AG04450 (cell line): ENCODE measurements at regions of chr11 and their contacts with region 1.

Region 1: GRCh38 chr11:120235024-120235861 is 4.7 kb upstream of the POU2F3 start:
- DNase-seq: no peak
- H3K4me3 ChIP-seq: no peak overlapping the region
- H3K27ac ChIP-seq: no peak overlapping the region
- H3K27me3 ChIP-seq: peaks cover 48% of the 10 kb centered on the region
- CTCF ChIP-seq: peak; percentile 83

Region 2: DNA sequence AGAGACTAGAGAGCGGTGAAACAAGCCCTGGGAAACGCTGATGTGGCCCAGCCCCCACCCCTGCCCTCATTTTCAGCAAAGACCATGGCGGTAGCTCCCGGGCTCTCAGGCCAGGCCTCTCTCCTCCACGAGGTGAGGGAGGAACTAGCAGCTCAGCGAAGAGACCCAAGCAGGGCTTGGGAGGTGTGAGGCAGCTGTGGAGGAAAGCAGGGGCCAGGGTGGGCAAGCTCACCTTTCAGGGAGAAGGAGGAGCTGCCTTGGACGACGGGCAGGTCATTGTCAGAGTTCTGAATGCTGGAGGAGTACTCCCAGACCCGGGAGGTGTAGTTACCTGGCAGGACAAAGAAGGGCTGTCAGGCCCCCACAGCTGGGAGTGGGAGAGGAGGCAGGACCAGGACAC is 117.3 kb before region 1 on chr11:
- CTCF ChIA-PET with region 1: no interaction called
- POLR2A ChIA-PET with region 1: no interaction called
- DNase-seq: no peak
- H3K4me3 ChIP-seq: no peak overlapping the region
- H3K27ac ChIP-seq: no peak overlapping the region
- H3K27me3 ChIP-seq: peaks cover 16% of the 10 kb centered on the region
- CTCF ChIP-seq: no peak

Region 3: DNA sequence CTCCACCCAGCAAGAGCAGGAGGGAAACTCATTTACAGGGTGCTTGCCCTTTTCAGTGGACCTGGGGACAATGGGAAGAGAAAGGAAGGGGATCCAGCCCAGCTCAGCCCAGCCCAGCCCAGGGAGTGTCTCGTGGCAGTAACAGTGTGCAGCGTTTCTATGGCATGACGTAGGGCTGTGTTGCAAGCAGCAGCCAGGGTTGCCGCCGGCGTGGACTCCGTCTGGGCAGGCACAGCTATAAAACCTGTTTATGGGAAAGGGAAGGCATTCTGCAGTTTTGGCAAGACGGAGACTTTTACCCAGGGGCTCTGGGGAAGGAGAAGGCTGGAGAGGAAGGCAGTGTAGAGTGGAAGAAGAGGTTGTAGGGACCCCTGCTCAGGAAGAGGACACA is 106.5 kb before region 1 on chr11:
- CTCF ChIA-PET with region 1: no interaction called
- POLR2A ChIA-PET with region 1: no interaction called
- DNase-seq: no peak
- H3K4me3 ChIP-seq: no peak overlapping the region
- H3K27ac ChIP-seq: no peak overlapping the region
- H3K27me3 ChIP-seq: peaks cover 28% of the 10 kb centered on the region
- CTCF ChIP-seq: no peak

Region 4: GRCh38 chr11:120182790-120183491 is 52.3 kb before region 1 on chr11:
- CTCF ChIA-PET with region 1: interaction called, 19 read pairs
- POLR2A ChIA-PET with region 1: no interaction called
- DNase-seq: no peak
- H3K4me3 ChIP-seq: no peak overlapping the region
- H3K27ac ChIP-seq: no peak overlapping the region
- H3K27me3 ChIP-seq: no peaks in the 10 kb centered on the region
- CTCF ChIP-seq: peak; percentile 34

Region 5: GRCh38 chr11:120248551-120249278 is 13.5 kb after region 1 on chr11:
- CTCF ChIA-PET with region 1: interaction called, 22 read pairs
- POLR2A ChIA-PET with region 1: no interaction called
- DNase-seq: no peak
- H3K4me3 ChIP-seq: no peak overlapping the region
- H3K27ac ChIP-seq: no peak overlapping the region
- H3K27me3 ChIP-seq: peaks cover 33% of the 10 kb centered on the region
- CTCF ChIP-seq: no peak